ENCODE measurements at regions of chr1 and their contacts with region 1.

Region 1: DNA sequence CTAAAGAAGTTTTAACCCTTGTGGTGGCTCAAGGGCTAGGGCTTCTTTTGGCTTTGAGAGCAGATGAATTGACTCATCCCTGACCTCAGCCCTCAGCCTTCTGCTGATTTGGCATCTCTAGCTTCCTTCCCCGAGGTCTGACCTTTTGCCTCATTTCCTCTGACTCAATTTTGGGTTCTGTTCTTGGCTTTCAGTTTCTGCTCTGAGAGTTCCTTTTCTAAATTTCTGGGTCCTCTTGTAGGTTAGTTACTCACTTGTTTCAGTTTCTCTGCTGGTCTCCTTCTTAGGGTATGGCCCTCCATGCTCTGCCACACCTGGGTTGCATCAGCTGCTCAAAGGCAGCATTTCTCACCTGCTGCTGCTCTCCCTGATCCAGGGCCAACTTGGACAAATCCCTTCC is 19.4 kb downstream of the PDE4B start:
- DNase-seq: peak; percentile 77
- H3K4me3 Mint-ChIP-seq: peak overlapping the region; percentile 6
- H3K27ac Mint-ChIP-seq: peak overlapping the region; percentile 68
- H3K4me1 Mint-ChIP-seq: peaks cover 43% of the 10 kb centered on the region
- H3K27me3 Mint-ChIP-seq: peaks cover 13% of the 10 kb centered on the region

Region 2: DNA sequence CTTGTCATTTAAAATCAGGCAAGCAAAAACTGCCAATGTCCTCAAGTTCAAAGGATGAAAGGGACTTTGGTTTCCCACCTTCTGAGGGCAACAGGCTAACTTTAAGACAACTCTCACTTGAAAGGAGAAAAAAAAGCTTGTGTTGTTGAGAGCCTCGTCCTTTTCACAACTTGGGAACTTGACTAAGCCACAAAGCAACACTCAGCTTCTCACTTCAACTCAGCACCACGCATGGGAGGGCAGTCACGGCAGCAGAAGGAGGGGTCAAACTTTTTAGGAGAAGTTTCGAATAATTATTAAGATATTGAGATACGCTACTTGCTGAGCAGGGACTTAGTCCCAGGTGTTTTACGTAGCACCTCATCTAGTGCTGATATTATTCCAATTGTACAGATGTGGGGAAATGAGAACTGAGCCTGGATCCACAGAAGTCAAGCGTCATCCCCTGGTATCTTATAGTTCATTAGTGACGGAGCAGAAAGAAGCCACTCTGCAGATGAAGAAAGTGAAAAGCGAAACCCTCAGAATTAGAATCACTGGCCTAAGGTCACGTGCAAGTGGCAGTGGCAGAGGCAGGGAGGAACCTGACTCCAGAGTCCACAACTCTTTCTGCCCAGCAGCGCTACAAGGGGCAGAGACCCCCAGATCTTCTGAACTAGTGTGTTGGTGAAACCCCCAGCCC is 929.4 kb before region 1 on chr1:
- intact Hi-C with region 1: loop called (anchors 10 kb)
- DNase-seq: no peak
- H3K4me3 Mint-ChIP-seq: no peak overlapping the region
- H3K27ac Mint-ChIP-seq: no peak overlapping the region
- H3K4me1 Mint-ChIP-seq: peaks cover 53% of the 10 kb centered on the region
- H3K27me3 Mint-ChIP-seq: no peaks in the 10 kb centered on the region

Region 3: GRCh38 chr1:65105596-65105995 is 706.5 kb before region 1 on chr1:
- intact Hi-C with region 1: no loop called
- DNase-seq: no peak
- H3K4me3 Mint-ChIP-seq: no peak overlapping the region
- H3K27ac Mint-ChIP-seq: no peak overlapping the region
- H3K4me1 Mint-ChIP-seq: no peaks in the 10 kb centered on the region
- H3K27me3 Mint-ChIP-seq: peaks cover 10% of the 10 kb centered on the region

Region 4: GRCh38 chr1:65243491-65243890 is 568.6 kb before region 1 on chr1:
- intact Hi-C with region 1: no loop called
- DNase-seq: no peak
- H3K4me3 Mint-ChIP-seq: no peak overlapping the region
- H3K27ac Mint-ChIP-seq: no peak overlapping the region
- H3K4me1 Mint-ChIP-seq: no peaks in the 10 kb centered on the region
- H3K27me3 Mint-ChIP-seq: peaks cover 17% of the 10 kb centered on the region

Region 5: DNA sequence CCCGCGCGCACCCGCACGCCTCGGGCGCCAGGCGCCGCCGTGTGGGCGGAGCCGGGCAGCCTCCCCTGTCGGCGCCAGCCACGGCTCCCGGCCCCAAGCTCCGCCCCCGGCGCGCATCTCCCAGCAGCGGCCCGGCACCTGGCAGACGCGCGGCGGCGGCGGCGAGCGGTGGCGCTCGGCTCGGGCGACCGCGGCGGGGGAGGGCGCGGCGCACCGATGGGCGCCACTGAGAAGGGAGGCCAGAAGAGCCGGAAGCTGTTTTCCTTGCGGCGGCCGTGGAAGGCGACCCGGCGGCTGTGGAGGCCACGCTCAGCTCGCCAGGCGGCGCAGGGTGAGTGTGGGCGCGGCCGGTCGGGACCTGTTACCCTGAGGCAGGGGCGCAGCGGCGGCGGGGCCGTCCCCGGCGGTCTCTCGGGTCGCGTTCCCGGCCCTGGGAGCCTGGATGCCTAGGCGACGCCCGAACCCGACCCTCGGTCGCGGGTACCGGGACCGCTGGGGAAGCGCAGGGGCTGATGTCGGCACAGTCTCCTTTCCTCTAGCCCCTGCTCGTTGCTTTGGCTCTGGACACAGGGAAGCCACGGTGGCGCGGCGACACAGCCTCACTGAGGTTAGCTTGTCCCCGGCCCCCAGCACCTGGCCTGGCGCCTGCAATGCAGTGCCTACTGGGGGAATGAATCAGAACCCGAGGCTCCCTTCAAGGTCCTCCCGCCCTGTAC is 557.6 kb before region 1 on chr1:
- intact Hi-C with region 1: loop called (anchors 5 kb)
- DNase-seq: peak; percentile 83
- H3K4me3 Mint-ChIP-seq: peak overlapping the region; percentile 93
- H3K27ac Mint-ChIP-seq: peak overlapping the region; percentile 40
- H3K4me1 Mint-ChIP-seq: peaks cover 34% of the 10 kb centered on the region
- H3K27me3 Mint-ChIP-seq: peaks cover 23% of the 10 kb centered on the region

Region 6: GRCh38 chr1:65694126-65694525 is 117.9 kb before region 1 on chr1:
- intact Hi-C with region 1: no loop called
- DNase-seq: no peak
- H3K4me3 Mint-ChIP-seq: no peak overlapping the region
- H3K27ac Mint-ChIP-seq: no peak overlapping the region
- H3K4me1 Mint-ChIP-seq: no peaks in the 10 kb centered on the region
- H3K27me3 Mint-ChIP-seq: no peaks in the 10 kb centered on the region

Region 7: DNA sequence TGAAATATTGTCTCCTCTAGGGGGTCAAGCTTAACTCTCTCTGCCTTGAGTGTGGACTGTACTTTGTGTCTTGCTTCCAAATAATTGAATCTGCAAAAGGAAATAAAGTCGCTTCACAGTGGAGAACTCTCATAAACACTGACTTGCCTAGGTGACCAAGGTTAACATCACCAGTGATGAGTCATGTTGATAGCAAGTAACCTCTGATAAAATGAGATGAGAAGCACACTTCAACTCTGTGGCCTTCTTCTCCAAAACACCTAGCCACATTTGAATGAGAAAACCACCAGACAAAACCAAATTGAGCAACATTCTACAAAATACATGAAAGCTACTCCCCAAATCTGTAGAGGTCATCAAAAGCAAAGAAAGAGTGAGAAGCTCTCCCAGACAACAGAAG is 18.2 kb after region 1 on chr1:
- intact Hi-C with region 1: loop called (anchors 1 kb)
- DNase-seq: peak; percentile 27
- H3K4me3 Mint-ChIP-seq: peak overlapping the region; percentile 31
- H3K27ac Mint-ChIP-seq: peak overlapping the region; percentile 79
- H3K4me1 Mint-ChIP-seq: peaks cover 36% of the 10 kb centered on the region
- H3K27me3 Mint-ChIP-seq: peaks cover 19% of the 10 kb centered on the region

Region 8: GRCh38 chr1:65881067-65881594 is 69.1 kb after region 1 on chr1:
- intact Hi-C with region 1: no loop called
- DNase-seq: no peak
- H3K4me3 Mint-ChIP-seq: no peak overlapping the region
- H3K27ac Mint-ChIP-seq: no peak overlapping the region
- H3K4me1 Mint-ChIP-seq: no peaks in the 10 kb centered on the region
- H3K27me3 Mint-ChIP-seq: no peaks in the 10 kb centered on the region

Region 9: GRCh38 chr1:66242646-66243547 is 430.8 kb after region 1 on chr1:
- intact Hi-C with region 1: loop called (anchors 1 kb)
- DNase-seq: peak; percentile 64
- H3K4me3 Mint-ChIP-seq: no peak overlapping the region
- H3K27ac Mint-ChIP-seq: no peak overlapping the region
- H3K4me1 Mint-ChIP-seq: peaks cover 28% of the 10 kb centered on the region
- H3K27me3 Mint-ChIP-seq: peaks cover 6% of the 10 kb centered on the region

Region 10: GRCh38 chr1:66374561-66375111 is 562.6 kb after region 1 on chr1:
- intact Hi-C with region 1: loop called (anchors 1 kb)
- DNase-seq: peak; percentile 19
- H3K4me3 Mint-ChIP-seq: peak overlapping the region; percentile 77
- H3K27ac Mint-ChIP-seq: peak overlapping the region; percentile 96
- H3K4me1 Mint-ChIP-seq: peaks cover 69% of the 10 kb centered on the region
- H3K27me3 Mint-ChIP-seq: no peaks in the 10 kb centered on the region

Region 11: DNA sequence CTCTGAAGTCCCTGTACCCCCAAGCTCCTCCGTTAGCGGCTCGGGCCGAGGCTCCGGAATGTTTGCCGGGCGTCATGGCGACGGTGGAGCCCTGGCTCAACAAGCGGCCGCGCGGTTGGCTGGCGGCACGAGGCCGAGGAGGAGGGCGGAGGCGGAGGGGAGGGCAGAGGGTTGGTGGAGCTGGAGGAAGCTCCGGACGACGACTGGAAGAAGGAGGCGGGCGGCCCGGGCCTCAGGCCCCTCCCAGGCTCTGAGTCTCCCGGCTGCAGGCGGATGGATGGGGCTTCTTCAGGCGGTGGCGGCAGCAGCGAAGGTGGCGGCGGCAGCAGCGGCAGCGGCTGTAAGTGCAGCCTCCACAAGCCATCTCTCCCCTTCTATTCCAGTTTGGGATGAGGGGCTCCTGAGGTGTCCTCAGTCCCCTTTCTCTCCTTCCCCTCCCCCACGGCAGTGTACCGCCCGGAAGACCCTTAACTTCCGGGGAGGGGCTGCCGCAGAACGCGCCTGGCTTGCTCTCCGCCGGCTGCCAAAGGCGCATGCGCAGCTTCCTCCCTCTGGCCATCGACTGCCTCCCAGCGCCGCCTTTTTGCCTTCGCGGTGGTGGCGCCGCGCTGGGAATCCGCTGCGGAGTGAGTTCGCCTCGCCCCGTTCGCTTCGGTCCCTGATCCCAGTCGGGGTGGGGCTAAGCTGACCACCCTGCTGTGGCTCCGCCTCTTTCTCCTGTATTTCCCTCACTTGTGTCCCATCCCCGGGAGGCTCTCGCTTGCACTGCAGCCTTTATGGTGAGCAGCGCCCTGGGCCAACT is 1112.9 kb after region 1 on chr1 and contains the starts of genes DNAI4 and MIER1:
- intact Hi-C with region 1: loop called (anchors 10 kb)
- DNase-seq: peak; percentile 98
- H3K4me3 Mint-ChIP-seq: peak within 1 kb of the TSS; percentile 93
- H3K27ac Mint-ChIP-seq: peak within 1 kb of the TSS; percentile 97
- H3K4me1 Mint-ChIP-seq: peaks cover 66% of the 10 kb centered on the region
- H3K27me3 Mint-ChIP-seq: no peaks in the 10 kb centered on the region
- total RNA-seq, gene DNAI4: 1.2 and 3.2 TPM in 2 replicates
- total RNA-seq, gene MIER1: 53.2 and 57.4 TPM in 2 replicates